ENCODE measurements at regions of chr1 and their contacts with region 1.

Region 1: DNA sequence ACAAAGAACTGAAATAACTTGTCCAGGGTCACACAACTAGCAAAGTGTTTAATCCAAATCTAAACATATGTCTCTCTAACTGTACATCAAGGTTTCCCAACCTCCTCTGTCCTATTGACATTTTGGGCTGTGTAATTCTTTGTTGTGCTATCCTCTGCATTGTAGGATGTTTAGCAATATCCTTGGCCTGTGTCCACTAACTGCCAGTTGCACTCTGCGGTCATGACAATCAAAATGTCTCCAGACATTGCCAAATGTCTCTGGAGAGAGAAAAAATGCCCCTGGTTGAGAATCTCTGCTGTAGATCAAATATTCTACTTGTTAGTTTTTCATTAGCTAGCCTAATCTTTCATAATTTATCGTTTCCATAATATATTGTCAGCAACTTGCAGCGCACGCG is 353.4 kb upstream of the NEGR1 start:
- DNase-seq: no peak
- H3K4me3 ChIP-seq: no peak overlapping the region
- H3K27ac ChIP-seq: no peak overlapping the region
- H3K4me1 ChIP-seq: no peaks in the 10 kb centered on the region
- H3K27me3 ChIP-seq: no peaks in the 10 kb centered on the region
- CTCF ChIP-seq: no peak
- EP300 ChIP-seq: no peak
- RAD21 ChIP-seq: no peak

Region 2: DNA sequence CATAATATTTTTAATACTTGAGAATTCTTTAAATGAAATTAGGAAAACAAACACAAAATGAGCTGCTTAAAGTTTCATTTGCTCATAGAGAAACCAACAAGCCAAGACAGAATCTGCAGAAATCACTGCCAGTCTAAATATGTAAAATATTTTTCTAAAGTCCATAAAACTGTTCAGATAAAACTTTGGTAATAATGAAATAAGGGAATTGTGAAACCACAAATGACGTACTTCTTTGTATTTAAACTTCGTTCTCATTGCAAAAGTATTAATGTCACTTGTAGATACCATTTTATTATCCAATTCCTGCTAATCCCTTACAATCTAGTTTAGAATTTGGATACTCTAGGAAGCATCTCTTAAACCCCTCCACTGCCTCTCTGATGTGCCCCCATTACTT is 118.9 kb before region 1 on chr1:
- CTCF ChIA-PET with region 1: no interaction called
- POLR2A ChIA-PET with region 1: no interaction called
- DNase-seq: no peak
- H3K4me3 ChIP-seq: no peak overlapping the region
- H3K27ac ChIP-seq: no peak overlapping the region
- H3K4me1 ChIP-seq: no peaks in the 10 kb centered on the region
- H3K27me3 ChIP-seq: no peaks in the 10 kb centered on the region
- CTCF ChIP-seq: no peak
- EP300 ChIP-seq: no peak
- RAD21 ChIP-seq: no peak

Region 3: DNA sequence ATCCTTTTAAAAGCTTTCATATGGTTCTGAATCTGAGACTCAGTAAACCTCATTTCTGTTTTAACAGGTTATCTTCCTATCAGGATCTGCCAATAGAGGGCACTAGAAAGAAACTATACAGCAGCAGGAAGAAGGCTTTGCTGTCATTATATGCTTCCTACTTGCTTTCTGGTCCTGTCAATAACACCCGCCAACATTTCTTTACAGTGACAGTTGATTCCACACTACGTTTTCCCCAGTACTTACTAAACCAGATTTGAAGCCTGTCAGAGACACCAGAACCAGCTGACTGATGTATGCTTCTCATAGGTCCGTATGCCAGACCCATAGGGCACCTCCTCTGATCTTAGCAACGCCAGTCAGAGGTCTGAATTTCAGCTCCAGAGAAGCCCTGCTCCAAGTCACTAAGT is 12.4 kb before region 1 on chr1:
- CTCF ChIA-PET with region 1: interaction called, 16 read pairs
- POLR2A ChIA-PET with region 1: no interaction called
- DNase-seq: peak; percentile 30
- H3K4me3 ChIP-seq: no peak overlapping the region
- H3K27ac ChIP-seq: no peak overlapping the region
- H3K4me1 ChIP-seq: peaks cover 0 to 4% of the 10 kb centered on the region in 2 experiments; a peak in 1 of 4 replicates
- H3K27me3 ChIP-seq: no peaks in the 10 kb centered on the region
- CTCF ChIP-seq: peak; percentile 71
- EP300 ChIP-seq: no peak
- RAD21 ChIP-seq: peak; percentile 80

Region 4: DNA sequence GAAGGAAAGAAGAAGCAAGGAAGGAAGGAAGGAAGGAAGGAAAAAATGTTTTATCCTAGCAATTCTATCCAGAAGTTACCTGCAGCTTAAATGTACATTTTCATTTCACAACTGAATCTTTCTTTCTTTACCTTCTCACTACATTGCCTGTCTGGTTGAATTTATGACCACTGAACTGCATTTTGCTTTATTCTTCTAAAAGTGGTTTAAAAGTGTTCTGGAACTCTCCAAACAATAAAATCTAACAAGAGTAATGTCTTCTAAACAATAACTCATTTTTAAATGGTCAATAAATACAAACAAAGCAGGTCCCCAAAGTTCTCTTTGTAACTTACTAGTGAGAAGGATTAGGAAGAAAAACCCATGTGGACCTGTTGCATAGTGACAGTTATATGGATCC is 234.2 kb after region 1 on chr1:
- CTCF ChIA-PET with region 1: no interaction called
- POLR2A ChIA-PET with region 1: no interaction called
- DNase-seq: no peak
- H3K4me3 ChIP-seq: no peak overlapping the region
- H3K27ac ChIP-seq: no peak overlapping the region
- H3K4me1 ChIP-seq: no peaks in the 10 kb centered on the region
- H3K27me3 ChIP-seq: no peaks in the 10 kb centered on the region
- CTCF ChIP-seq: no peak
- EP300 ChIP-seq: no peak
- RAD21 ChIP-seq: no peak